Naive thymus-derived CD4-positive, alpha-beta T cell (primary cell): ENCODE measurements at regions of chr15 and their contacts with region 1.

Region 1: GRCh38 chr15:77974098-77974414 is 103.5 kb downstream of the TBC1D2B start:
- DNase-seq: no peak
- ATAC-seq: no peak
- H3K4me3 ChIP-seq: no peak overlapping the region
- H3K4me3 Mint-ChIP-seq: no peak overlapping the region
- H3K27ac ChIP-seq: no peak overlapping the region
- H3K27ac Mint-ChIP-seq: no peak overlapping the region
- H3K4me1 ChIP-seq: no peaks in the 10 kb centered on the region
- H3K4me1 Mint-ChIP-seq: no peaks in the 10 kb centered on the region
- H3K27me3 ChIP-seq: no peaks in the 10 kb centered on the region
- H3K27me3 Mint-ChIP-seq: peaks cover 0 to 7% (median 0%) of the 10 kb centered on the region in 5 donors

Region 2: DNA sequence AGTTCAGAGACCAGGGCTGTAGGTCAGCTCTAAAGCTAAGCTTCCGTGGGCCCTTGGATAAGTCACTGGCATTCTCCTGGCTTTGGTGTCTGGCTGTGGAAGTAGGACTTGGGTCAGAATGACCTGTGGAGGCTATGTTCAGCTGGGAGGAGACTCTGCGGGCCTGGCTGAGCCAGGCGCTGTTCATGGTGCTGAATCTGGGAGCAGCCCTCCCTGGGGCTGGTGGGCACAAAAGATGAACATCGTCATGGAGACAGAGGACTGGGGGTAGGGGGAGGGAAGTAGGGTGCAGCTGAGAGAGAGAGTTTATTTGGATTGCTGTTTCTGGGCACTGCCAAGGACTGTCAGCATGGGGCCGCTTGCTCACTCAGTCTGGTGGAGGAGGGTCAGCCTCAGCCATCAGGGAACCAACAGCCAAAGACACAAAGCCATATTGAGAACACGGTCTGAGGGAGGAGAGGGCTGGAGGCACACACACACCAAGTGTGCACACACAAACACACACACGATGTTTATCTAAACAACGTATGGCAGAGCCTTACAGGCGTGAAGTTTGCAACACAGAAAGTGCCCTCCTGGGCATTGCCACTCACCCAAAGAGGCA is 220.7 kb before region 1 on chr15:
- CTCF ChIA-PET with region 1: no interaction called
- POLR2A ChIA-PET with region 1: no interaction called
- intact Hi-C with region 1: no loop called
- DNase-seq: no peak
- ATAC-seq: no peak
- H3K4me3 ChIP-seq: no peak overlapping the region
- H3K4me3 Mint-ChIP-seq: no peak overlapping the region
- H3K27ac ChIP-seq: no peak overlapping the region
- H3K27ac Mint-ChIP-seq: no peak overlapping the region
- H3K4me1 ChIP-seq: no peaks in the 10 kb centered on the region
- H3K4me1 Mint-ChIP-seq: peaks cover 0 to 3% (median 0%) of the 10 kb centered on the region in 7 donors
- H3K27me3 ChIP-seq: no peaks in the 10 kb centered on the region
- H3K27me3 Mint-ChIP-seq: peaks cover 0 to 7% (median 0%) of the 10 kb centered on the region in 5 donors

Region 3: DNA sequence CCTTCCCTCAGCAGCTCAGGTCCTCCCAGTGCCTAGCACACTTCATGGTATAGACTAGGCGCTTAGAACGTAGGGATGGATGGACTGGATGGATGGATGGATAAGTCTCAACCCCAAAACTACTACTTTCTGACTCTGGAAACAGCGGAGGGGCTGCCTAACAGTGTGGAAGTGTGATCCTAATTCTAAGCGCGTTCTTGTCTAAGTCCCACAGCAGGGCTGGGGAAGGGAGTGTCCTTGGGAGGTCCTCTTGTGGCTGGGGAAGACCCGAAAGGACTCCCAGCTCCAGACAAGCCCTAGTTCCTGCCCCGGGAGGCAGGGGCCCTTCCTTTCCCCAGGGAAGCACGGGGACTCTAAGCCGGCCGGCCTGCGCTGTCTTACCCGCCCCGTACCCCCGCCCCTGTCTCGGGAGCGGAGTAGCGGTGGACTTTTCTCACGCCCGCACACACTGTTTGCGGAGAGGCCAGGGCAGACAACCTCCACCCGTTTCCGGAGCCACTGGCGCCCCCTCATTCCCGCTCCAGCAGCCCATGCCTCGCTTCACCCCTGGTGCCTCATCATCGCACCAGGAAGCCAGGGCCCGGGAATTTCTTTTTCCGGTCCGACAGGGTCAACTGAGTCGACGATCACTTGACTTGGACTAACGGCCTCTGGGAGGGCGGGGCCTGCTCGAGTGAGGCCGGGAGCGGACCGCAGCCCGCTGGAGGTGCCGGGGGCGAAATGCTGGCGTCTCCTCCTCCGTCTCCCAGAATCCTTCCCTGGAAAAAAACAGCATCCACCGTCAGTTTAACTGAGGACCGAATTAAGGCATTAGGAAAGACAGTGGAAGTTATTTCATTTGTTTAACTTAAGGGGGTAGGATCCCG is 29.8 kb before region 1 on chr15:
- CTCF ChIA-PET with region 1: no interaction called
- POLR2A ChIA-PET with region 1: no interaction called
- intact Hi-C with region 1: no loop called
- DNase-seq: peak in 3 of 9 donors; percentile 6 to 40 (median 16)
- ATAC-seq: peak; percentile 66
- H3K4me3 ChIP-seq: peak overlapping the region; percentile 46
- H3K4me3 Mint-ChIP-seq: peak overlapping the region; percentile 30 to 81 (median 70)
- H3K27ac ChIP-seq: peak overlapping the region; percentile 28
- H3K27ac Mint-ChIP-seq: peak overlapping the region in 3 of 9 donors; percentile 4 to 63 (median 51)
- H3K4me1 ChIP-seq: no peaks in the 10 kb centered on the region
- H3K4me1 Mint-ChIP-seq: peaks cover 0 to 13% (median 0%) of the 10 kb centered on the region in 7 donors
- H3K27me3 ChIP-seq: no peaks in the 10 kb centered on the region
- H3K27me3 Mint-ChIP-seq: peaks cover 0 to 50% (median 16%) of the 10 kb centered on the region in 5 donors

Region 4: DNA sequence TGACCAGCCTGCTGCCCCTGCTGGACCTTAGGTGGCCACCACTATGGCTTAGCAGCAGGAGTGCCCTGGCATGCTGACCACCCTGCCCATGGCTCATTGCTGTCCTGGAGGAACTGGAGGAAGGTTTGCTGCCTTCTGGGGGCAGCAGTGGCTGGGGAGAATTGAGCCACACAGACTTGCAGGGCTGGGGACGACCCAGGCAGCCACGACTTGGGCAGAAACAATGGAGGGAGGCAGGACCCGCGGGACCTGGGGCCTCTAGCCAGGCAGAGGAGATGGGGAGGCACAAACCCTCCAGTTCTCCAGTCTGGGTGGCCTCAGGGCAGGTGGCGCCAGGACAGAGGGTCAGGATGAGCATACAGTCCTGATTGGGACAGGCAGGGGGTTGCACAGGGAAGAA is 804.4 kb after region 1 on chr15:
- CTCF ChIA-PET with region 1: no interaction called
- POLR2A ChIA-PET with region 1: no interaction called
- intact Hi-C with region 1: loop called in 1 of 2 experiments (anchors 10 kb)
- DNase-seq: no peak
- ATAC-seq: no peak
- H3K4me3 ChIP-seq: no peak overlapping the region
- H3K4me3 Mint-ChIP-seq: no peak overlapping the region
- H3K27ac ChIP-seq: no peak overlapping the region
- H3K27ac Mint-ChIP-seq: no peak overlapping the region
- H3K4me1 ChIP-seq: no peaks in the 10 kb centered on the region
- H3K4me1 Mint-ChIP-seq: no peaks in the 10 kb centered on the region
- H3K27me3 ChIP-seq: no peaks in the 10 kb centered on the region
- H3K27me3 Mint-ChIP-seq: peaks cover 0 to 4% (median 0%) of the 10 kb centered on the region in 5 donors